ENCODE measurements at regions of chr7 and their contacts with region 1.

Region 1: GRCh38 chr7:108311446-108312168 is 144.6 kb downstream of the NRCAM start:
- DNase-seq: peak; percentile 79
- H3K4me3 Mint-ChIP-seq: no peak overlapping the region
- H3K27ac Mint-ChIP-seq: peak overlapping the region; percentile 88
- H3K4me1 Mint-ChIP-seq: peaks cover 40% of the 10 kb centered on the region
- H3K27me3 Mint-ChIP-seq: no peaks in the 10 kb centered on the region
- CTCF ChIP-seq: no peak

Region 2: DNA sequence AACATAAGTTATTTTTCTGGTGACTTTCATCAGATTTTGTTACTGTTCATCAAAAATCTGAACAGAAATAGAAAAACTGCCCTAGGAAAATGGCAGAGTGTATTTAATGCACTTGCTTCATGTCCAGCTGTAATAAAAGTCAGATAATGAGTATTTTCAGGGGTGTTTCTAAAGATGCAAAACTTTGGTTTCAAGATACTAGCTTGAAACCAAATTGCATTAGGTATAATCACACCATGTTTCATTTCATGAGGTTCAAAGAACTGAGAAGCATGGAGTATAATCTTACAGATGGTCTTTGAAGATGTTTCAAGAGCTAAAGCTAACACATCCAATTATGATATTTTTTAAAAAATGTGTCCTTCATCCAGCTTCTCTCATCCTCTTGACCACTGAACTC is 15.7 kb after region 1 on chr7:
- CTCF ChIA-PET with region 1: no interaction called
- POLR2A ChIA-PET with region 1: no interaction called
- intact Hi-C with region 1: no loop called
- DNase-seq: no peak
- H3K4me3 Mint-ChIP-seq: no peak overlapping the region
- H3K27ac Mint-ChIP-seq: no peak overlapping the region
- H3K4me1 Mint-ChIP-seq: no peaks in the 10 kb centered on the region
- H3K27me3 Mint-ChIP-seq: no peaks in the 10 kb centered on the region
- CTCF ChIP-seq: no peak

Region 3: GRCh38 chr7:108347616-108348015 is 36.0 kb after region 1 on chr7:
- CTCF ChIA-PET with region 1: no interaction called
- POLR2A ChIA-PET with region 1: interaction called, 5 read pairs
- intact Hi-C with region 1: loop called (anchors 5 kb)
- DNase-seq: peak; percentile 67
- H3K4me3 Mint-ChIP-seq: no peak overlapping the region
- H3K27ac Mint-ChIP-seq: no peak overlapping the region
- H3K4me1 Mint-ChIP-seq: peaks cover 7% of the 10 kb centered on the region
- H3K27me3 Mint-ChIP-seq: no peaks in the 10 kb centered on the region
- CTCF ChIP-seq: no peak